HCT116 (cell line): ENCODE measurements at regions of chr1 and their contacts with region 1.

Region 1: GRCh38 chr1:21270086-21270689 is 20.1 kb downstream of the ECE1 start:
- DNase-seq: peak; percentile 54
- ATAC-seq: peak; percentile 94
- H3K4me3 ChIP-seq: no peak overlapping the region
- H3K27ac ChIP-seq: no peak overlapping the region
- H3K4me1 ChIP-seq: peaks cover 10 to 35% of the 10 kb centered on the region in 2 experiments
- H3K27me3 ChIP-seq: no peaks in the 10 kb centered on the region
- CTCF ChIP-seq: peak; percentile 99 to 100 (median 99)
- POLR2A ChIP-seq: no peak
- RAD21 ChIP-seq: peak; percentile 89

Region 2: GRCh38 chr1:21232044-21232443 is 38.1 kb before region 1 on chr1:
- CTCF ChIA-PET with region 1: interaction called, 17 read pairs
- POLR2A ChIA-PET with region 1: no interaction called
- RAD21 ChIA-PET with region 1: no interaction called
- intact Hi-C with region 1: no loop called
- DNase-seq: peak; percentile 26
- ATAC-seq: peak; percentile 81
- H3K4me3 ChIP-seq: no peak overlapping the region
- H3K27ac ChIP-seq: no peak overlapping the region
- H3K4me1 ChIP-seq: peaks cover 0 to 10% of the 10 kb centered on the region in 2 experiments; a peak in 1 of 4 replicates
- H3K27me3 ChIP-seq: no peaks in the 10 kb centered on the region
- CTCF ChIP-seq: peak; percentile 61 to 83 (median 76)
- POLR2A ChIP-seq: no peak
- RAD21 ChIP-seq: peak; percentile 90

Region 3: GRCh38 chr1:21255278-21255942 is 14.8 kb before region 1 on chr1:
- CTCF ChIA-PET with region 1: interaction called, 41 read pairs
- POLR2A ChIA-PET with region 1: no interaction called
- RAD21 ChIA-PET with region 1: interaction called, 6 to 14 read pairs
- intact Hi-C with region 1: no loop called
- DNase-seq: peak; percentile 68
- ATAC-seq: peak; percentile 96
- H3K4me3 ChIP-seq: no peak overlapping the region
- H3K27ac ChIP-seq: no peak overlapping the region
- H3K4me1 ChIP-seq: peaks cover 14% of the 10 kb centered on the region in 2 experiments
- H3K27me3 ChIP-seq: no peaks in the 10 kb centered on the region
- CTCF ChIP-seq: peak; percentile 86 to 92 (median 86)
- POLR2A ChIP-seq: no peak
- RAD21 ChIP-seq: peak; percentile 93

Region 4: DNA sequence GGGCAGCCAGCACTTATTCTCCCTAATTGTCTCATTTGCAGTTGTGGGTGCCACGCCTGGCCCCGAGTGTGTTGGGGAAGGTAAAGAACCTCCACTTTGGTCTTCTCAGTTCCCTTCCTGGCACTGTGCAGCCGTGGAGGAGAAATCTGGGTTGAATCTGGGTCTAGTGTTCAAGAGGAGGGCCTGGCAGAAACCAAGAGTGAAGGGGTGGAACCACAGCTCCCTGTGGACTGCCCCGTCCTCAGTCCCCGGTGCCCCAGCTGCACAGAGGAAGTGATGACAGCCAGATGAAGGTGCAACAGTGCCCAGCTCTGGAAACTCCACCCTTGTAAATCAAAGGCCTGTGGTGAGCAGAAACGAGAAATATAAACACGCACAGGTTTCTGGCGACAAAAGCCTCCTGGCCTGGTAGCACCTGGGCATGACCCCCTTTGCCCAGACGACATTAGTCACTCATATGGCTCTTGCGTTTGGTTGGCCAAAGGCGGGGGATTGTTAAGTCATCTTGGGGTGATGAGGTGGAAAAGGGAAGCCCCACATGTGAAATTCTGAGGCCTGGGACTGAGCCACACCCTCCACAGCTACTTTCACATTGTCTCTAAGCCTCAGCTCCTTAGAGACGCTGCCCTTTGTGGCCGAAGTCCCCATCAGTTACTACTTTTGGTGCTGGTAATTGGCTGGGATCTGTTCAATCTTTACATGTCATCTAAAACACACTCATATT is 24.2 kb after region 1 on chr1:
- CTCF ChIA-PET with region 1: interaction called, 21 read pairs
- POLR2A ChIA-PET with region 1: no interaction called
- RAD21 ChIA-PET with region 1: no interaction called
- intact Hi-C with region 1: no loop called
- DNase-seq: peak; percentile 47
- ATAC-seq: peak; percentile 57
- H3K4me3 ChIP-seq: peak overlapping the region in 1 of 2 experiments; percentile 29; a peak in 2 of 4 replicates
- H3K27ac ChIP-seq: peak overlapping the region; percentile 42
- H3K4me1 ChIP-seq: peaks cover 45 to 85% of the 10 kb centered on the region in 2 experiments
- H3K27me3 ChIP-seq: no peaks in the 10 kb centered on the region
- CTCF ChIP-seq: no peak
- POLR2A ChIP-seq: no peak
- RAD21 ChIP-seq: no peak

Region 5: DNA sequence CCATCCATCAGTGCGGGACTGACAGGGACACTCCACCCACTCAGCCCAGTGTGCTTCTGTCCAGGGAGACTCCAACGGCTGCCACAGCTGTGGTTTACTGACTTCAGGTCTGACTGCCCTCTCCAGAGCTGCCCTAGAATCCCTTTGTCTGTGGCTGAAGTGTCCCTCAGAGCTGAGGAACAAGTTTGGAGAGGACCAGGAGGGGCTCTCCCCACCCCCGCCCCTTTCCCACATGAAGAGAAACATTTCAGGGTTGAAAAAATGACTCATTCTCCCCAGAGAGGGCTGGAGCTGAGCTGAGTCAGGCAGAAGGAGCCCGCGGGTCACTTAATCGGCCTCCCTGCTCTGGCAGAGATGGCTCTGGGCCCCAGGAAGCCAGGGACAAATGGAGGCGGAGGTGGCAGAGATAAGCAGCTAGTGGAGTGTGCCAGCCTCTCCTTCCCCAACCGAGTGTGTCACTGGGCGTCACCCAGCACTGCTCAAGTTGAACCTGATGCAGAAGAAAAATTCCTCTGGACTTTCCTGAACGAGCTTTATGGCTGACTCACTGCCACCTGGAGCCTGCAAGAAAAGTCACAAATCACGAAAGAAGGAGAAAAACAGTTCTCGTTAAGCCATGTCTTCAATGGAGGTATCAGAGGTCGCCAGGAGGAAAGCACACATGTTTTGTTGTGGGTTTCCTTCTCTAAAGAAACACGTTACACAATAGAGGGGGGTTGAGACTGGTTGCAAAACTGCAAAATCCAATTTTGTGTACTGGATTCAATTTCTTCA is 54.4 kb after region 1 on chr1:
- CTCF ChIA-PET with region 1: interaction called, 30 read pairs
- POLR2A ChIA-PET with region 1: interaction called, 5 read pairs
- RAD21 ChIA-PET with region 1: interaction called in 1 of 2 experiments, 5 read pairs
- intact Hi-C with region 1: no loop called
- DNase-seq: peak; percentile 94
- ATAC-seq: peak; percentile 90
- H3K4me3 ChIP-seq: peak overlapping the region; percentile 20 to 42
- H3K27ac ChIP-seq: peak overlapping the region; percentile 84
- H3K4me1 ChIP-seq: peaks cover 73 to 94% of the 10 kb centered on the region in 2 experiments
- H3K27me3 ChIP-seq: no peaks in the 10 kb centered on the region
- CTCF ChIP-seq: no peak
- POLR2A ChIP-seq: no peak
- RAD21 ChIP-seq: no peak

Region 6: GRCh38 chr1:21334214-21335087 is 64.3 kb after region 1 on chr1:
- CTCF ChIA-PET with region 1: interaction called, 13 read pairs
- POLR2A ChIA-PET with region 1: no interaction called
- RAD21 ChIA-PET with region 1: interaction called in 1 of 2 experiments, 5 read pairs
- intact Hi-C with region 1: no loop called
- DNase-seq: no peak
- ATAC-seq: peak; percentile 85
- H3K4me3 ChIP-seq: no peak overlapping the region
- H3K27ac ChIP-seq: peak overlapping the region; percentile 66
- H3K4me1 ChIP-seq: peaks cover 58 to 72% of the 10 kb centered on the region in 2 experiments
- H3K27me3 ChIP-seq: no peaks in the 10 kb centered on the region
- CTCF ChIP-seq: peak; percentile 71 to 90 (median 77)
- POLR2A ChIP-seq: no peak
- RAD21 ChIP-seq: peak; percentile 82